Activated CD4-positive, alpha-beta T cell treated with anti-CD3 and anti-CD28 coated beads for 36 hours (primary cell): ENCODE measurements at regions of chr11 and their contacts with region 1.

Region 1: GRCh38 chr11:57249384-57250319 is 12.6 kb upstream of the APLNR start:
- DNase-seq: peak; percentile 75
- ATAC-seq: peak; percentile 87
- H3K4me3 Mint-ChIP-seq: no peak overlapping the region
- H3K27ac Mint-ChIP-seq: no peak overlapping the region
- H3K4me1 Mint-ChIP-seq: peaks cover 16% of the 10 kb centered on the region
- H3K27me3 Mint-ChIP-seq: peaks cover 28% of the 10 kb centered on the region

Region 2: DNA sequence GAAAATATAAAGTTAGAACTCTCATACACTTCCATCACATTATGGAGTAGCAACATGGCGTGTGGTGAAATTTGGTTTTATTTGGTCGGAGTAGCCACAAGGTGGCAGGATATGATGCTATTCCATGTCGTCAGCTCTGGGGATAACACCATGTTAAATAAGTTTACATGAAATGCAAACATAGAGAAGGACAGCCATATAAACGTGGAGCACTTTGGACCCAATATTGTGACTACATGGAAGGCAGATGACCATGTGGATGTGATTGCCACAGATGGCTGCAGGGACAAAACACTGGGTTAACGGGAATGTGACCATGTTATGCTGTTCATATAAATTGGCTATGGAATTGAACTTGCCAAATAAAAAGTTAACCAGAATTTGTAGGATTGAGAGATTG is 727.6 kb before region 1 on chr11:
- CTCF ChIA-PET with region 1: no interaction called
- POLR2A ChIA-PET with region 1: no interaction called
- intact Hi-C with region 1: no loop called
- DNase-seq: no peak
- ATAC-seq: no peak
- H3K4me3 Mint-ChIP-seq: no peak overlapping the region
- H3K27ac Mint-ChIP-seq: no peak overlapping the region
- H3K4me1 Mint-ChIP-seq: no peaks in the 10 kb centered on the region
- H3K27me3 Mint-ChIP-seq: no peaks in the 10 kb centered on the region

Region 3: GRCh38 chr11:57001674-57002401 is 247.8 kb before region 1 on chr11:
- CTCF ChIA-PET with region 1: interaction called, 3 read pairs
- POLR2A ChIA-PET with region 1: no interaction called
- intact Hi-C with region 1: loop called (anchors 1 to 2 kb)
- DNase-seq: peak; percentile 7
- ATAC-seq: no peak
- H3K4me3 Mint-ChIP-seq: no peak overlapping the region
- H3K27ac Mint-ChIP-seq: no peak overlapping the region
- H3K4me1 Mint-ChIP-seq: no peaks in the 10 kb centered on the region
- H3K27me3 Mint-ChIP-seq: no peaks in the 10 kb centered on the region

Region 4: GRCh38 chr11:57116654-57117053 is 133.0 kb before region 1 on chr11:
- CTCF ChIA-PET with region 1: interaction called, 13 read pairs
- POLR2A ChIA-PET with region 1: no interaction called
- intact Hi-C with region 1: loop called (anchors 1 kb)
- DNase-seq: peak; percentile 46
- ATAC-seq: peak; percentile 23
- H3K4me3 Mint-ChIP-seq: no peak overlapping the region
- H3K27ac Mint-ChIP-seq: no peak overlapping the region
- H3K4me1 Mint-ChIP-seq: no peaks in the 10 kb centered on the region
- H3K27me3 Mint-ChIP-seq: peaks cover 4% of the 10 kb centered on the region

Region 5: GRCh38 chr11:57131080-57131790 is 118.4 kb before region 1 on chr11:
- CTCF ChIA-PET with region 1: interaction called, 4 read pairs
- POLR2A ChIA-PET with region 1: no interaction called
- intact Hi-C with region 1: loop called (anchors 5 kb)
- DNase-seq: peak; percentile 23
- ATAC-seq: no peak
- H3K4me3 Mint-ChIP-seq: no peak overlapping the region
- H3K27ac Mint-ChIP-seq: no peak overlapping the region
- H3K4me1 Mint-ChIP-seq: no peaks in the 10 kb centered on the region
- H3K27me3 Mint-ChIP-seq: peaks cover 23% of the 10 kb centered on the region